Naive thymus-derived CD4-positive, alpha-beta T cell (primary cell): ENCODE measurements at regions of chr13 and their contacts with region 1.

Region 1: GRCh38 chr13:27826379-27827353 is 34.4 kb downstream of the GSX1 start:
- DNase-seq: peak; percentile 29 to 70 (median 53)
- ATAC-seq: peak; percentile 67
- H3K4me3 ChIP-seq: no peak overlapping the region
- H3K4me3 Mint-ChIP-seq: peak overlapping the region in 3 of 10 donors; percentile 22 to 34 (median 29)
- H3K27ac ChIP-seq: no peak overlapping the region
- H3K27ac Mint-ChIP-seq: no peak overlapping the region
- H3K4me1 ChIP-seq: peaks cover 0 to 3% of the 10 kb centered on the region in 2 donors
- H3K4me1 Mint-ChIP-seq: peaks cover 0 to 15% (median 3%) of the 10 kb centered on the region in 7 donors
- H3K27me3 ChIP-seq: peaks cover 3 to 12% of the 10 kb centered on the region in 2 donors
- H3K27me3 Mint-ChIP-seq: peaks cover 73 to 91% (median 75%) of the 10 kb centered on the region in 5 donors

Region 2: GRCh38 chr13:26985285-26985878 is 841.3 kb before region 1 on chr13:
- CTCF ChIA-PET with region 1: interaction called, 12 read pairs
- POLR2A ChIA-PET with region 1: no interaction called
- intact Hi-C with region 1: loop called (anchors 1 to 5 kb)
- DNase-seq: peak; percentile 17 to 76 (median 65)
- ATAC-seq: peak; percentile 83
- H3K4me3 ChIP-seq: no peak overlapping the region
- H3K4me3 Mint-ChIP-seq: no peak overlapping the region
- H3K27ac ChIP-seq: no peak overlapping the region
- H3K27ac Mint-ChIP-seq: peak overlapping the region in 1 of 9 donors; percentile 46
- H3K4me1 ChIP-seq: no peaks in the 10 kb centered on the region
- H3K4me1 Mint-ChIP-seq: peaks cover 0 to 10% (median 0%) of the 10 kb centered on the region in 7 donors
- H3K27me3 ChIP-seq: no peaks in the 10 kb centered on the region
- H3K27me3 Mint-ChIP-seq: peaks cover 3 to 17% (median 11%) of the 10 kb centered on the region in 5 donors

Region 3: DNA sequence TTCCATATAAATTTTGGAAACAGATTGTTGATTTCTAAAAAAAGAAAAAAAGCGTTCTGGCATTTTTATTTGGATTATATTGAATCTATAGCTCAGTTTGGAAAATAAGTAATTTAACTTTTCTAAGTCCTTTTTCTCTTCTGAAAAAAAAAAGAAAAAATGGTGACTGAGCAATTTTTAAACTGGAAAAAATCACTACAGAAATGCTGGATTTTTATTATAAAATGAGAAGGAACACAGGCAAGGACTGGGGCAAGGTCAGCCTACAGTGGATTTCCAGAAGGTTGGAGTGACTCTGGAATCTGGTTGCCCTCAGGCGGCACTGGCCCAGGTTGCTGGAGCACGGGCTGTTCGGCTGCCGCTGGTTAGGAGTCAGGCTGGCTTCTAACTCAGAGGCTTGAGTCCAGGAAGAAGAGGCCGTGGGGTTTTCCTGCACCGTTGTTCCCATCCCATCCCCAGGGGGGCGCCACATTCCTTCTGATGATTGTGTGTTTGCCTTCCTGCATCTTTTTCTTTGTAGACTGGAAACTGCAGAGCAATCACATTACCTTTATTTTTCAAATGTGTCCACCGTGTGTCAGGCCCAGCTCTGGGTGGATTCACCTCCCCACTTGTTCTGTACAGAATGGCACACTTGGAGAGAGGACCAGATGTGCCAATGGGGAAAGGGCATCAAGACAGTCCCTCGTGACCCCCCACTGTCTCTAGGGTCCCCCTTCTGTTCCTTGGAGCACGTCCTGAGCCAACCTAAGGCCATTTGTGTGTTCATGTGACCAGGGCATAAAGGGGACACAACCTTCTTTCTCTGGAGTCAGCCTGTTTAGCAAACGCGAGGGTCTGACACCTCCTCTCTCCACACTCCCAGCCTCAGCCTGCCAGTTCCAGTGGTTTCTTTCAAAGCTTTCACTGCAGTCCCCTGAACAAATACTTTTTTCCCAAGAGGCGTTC is 446.7 kb before region 1 on chr13:
- CTCF ChIA-PET with region 1: interaction called, 124 read pairs
- POLR2A ChIA-PET with region 1: no interaction called
- intact Hi-C with region 1: loop called in 1 of 2 experiments (anchors 1 kb)
- DNase-seq: peak; percentile 25 to 62 (median 43)
- ATAC-seq: peak; percentile 65
- H3K4me3 ChIP-seq: no peak overlapping the region
- H3K4me3 Mint-ChIP-seq: no peak overlapping the region
- H3K27ac ChIP-seq: no peak overlapping the region
- H3K27ac Mint-ChIP-seq: no peak overlapping the region
- H3K4me1 ChIP-seq: no peaks in the 10 kb centered on the region
- H3K4me1 Mint-ChIP-seq: peaks cover 0 to 10% (median 0%) of the 10 kb centered on the region in 7 donors
- H3K27me3 ChIP-seq: no peaks in the 10 kb centered on the region
- H3K27me3 Mint-ChIP-seq: peaks cover 4 to 9% (median 6%) of the 10 kb centered on the region in 5 donors

Region 4: DNA sequence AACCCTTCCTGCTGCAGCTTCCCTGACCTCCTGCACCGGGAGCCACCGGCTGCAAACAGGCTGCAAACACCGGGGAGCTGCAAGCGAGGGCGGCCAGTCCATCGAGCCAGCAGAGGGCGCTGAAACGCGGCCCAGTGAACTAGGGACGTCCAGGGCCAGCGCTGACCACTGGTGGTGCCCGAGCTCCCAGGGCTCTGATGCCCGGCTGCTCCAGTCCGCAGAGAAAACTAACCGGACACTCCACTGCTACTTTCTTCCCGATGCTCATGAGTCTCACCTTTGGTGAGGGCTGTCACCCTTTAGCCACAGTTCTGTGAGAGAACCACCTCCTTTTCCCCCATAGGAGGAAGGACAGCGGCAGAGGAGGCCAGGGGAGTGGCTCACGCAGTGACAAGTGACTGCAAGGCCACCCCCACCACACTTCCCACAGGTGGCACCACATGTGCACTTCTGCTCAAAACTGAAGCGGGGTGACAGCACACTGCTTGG is 293.5 kb before region 1 on chr13:
- CTCF ChIA-PET with region 1: interaction called, 6 read pairs
- POLR2A ChIA-PET with region 1: no interaction called
- intact Hi-C with region 1: loop called (anchors 1 kb)
- DNase-seq: peak in 7 of 9 donors; percentile 17 to 51 (median 42)
- ATAC-seq: peak; percentile 83
- H3K4me3 ChIP-seq: no peak overlapping the region
- H3K4me3 Mint-ChIP-seq: peak overlapping the region in 6 of 10 donors; percentile 26 to 52 (median 44)
- H3K27ac ChIP-seq: no peak overlapping the region
- H3K27ac Mint-ChIP-seq: no peak overlapping the region
- H3K4me1 ChIP-seq: peaks cover 0 to 9% of the 10 kb centered on the region in 2 donors
- H3K4me1 Mint-ChIP-seq: peaks cover 0 to 12% (median 10%) of the 10 kb centered on the region in 7 donors
- H3K27me3 ChIP-seq: no peaks in the 10 kb centered on the region
- H3K27me3 Mint-ChIP-seq: peaks cover 0 to 17% (median 5%) of the 10 kb centered on the region in 5 donors

Region 5: DNA sequence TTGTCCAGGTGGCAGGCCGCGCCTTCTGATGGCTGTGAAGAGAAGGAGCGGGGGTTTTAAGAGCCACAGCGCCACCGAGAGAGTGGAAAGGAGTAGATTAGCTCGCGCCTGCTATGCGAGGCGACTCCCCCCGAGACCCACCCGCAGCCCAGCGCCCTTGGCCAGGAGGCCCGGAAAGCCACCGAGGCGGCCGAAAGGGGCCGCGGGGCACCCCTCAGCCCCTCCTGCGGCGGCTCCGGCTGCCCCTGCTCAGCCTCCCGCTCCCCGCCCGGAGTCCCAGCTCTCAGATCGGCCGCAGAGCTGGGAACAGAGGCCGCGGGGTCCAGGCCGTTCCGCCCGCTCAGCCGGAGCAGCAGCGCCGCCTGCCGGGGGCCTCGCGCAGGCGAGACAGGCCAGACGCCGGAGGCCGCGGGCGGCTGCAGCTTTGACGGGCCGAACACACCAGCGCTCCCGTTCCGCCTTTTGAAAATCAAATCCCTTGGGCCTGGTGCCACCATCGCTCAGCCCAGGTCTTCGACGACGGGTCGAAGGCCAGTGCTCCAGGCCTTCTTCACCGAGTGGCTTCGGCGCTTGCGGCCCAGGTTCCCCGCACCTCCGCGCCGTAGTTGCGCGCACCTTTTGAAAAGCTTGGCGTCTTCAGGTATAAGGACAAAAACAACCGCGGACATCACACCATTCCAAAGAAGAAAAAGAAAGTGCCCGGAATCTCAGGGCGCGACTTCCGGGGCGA is 127.2 kb after region 1 on chr13:
- CTCF ChIA-PET with region 1: no interaction called
- POLR2A ChIA-PET with region 1: no interaction called
- intact Hi-C with region 1: loop called in 1 of 2 experiments (anchors 10 kb)
- DNase-seq: peak in 8 of 9 donors; percentile 28 to 79 (median 54)
- ATAC-seq: peak; percentile 87
- H3K4me3 ChIP-seq: peak overlapping the region; percentile 35
- H3K4me3 Mint-ChIP-seq: peak overlapping the region; percentile 70 to 83 (median 78)
- H3K27ac ChIP-seq: no peak overlapping the region
- H3K27ac Mint-ChIP-seq: peak overlapping the region in 1 of 9 donors; percentile 38
- H3K4me1 ChIP-seq: no peaks in the 10 kb centered on the region
- H3K4me1 Mint-ChIP-seq: peaks cover 0 to 26% (median 15%) of the 10 kb centered on the region in 7 donors
- H3K27me3 ChIP-seq: peaks cover 0 to 16% of the 10 kb centered on the region in 2 donors
- H3K27me3 Mint-ChIP-seq: peaks cover 75 to 83% (median 77%) of the 10 kb centered on the region in 5 donors

Region 6: DNA sequence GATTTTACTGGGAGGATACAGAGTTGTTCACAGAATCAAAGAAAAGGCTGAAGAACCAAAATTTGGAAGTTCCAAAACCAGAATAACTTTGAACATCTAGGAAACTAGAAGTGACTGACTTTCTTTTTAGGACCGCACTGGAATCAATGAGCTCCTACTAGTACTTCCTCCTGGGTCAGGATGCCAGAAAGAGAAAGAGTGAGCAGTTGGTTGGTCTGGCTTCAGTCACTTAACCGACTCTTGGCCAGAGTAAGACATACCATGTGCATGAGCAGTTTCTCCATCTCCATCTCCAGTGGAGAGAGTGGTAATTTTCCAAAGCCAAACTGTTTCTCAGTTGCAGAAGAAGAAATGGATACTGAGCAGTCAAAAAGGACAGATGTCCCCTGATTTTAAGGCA is 966.3 kb after region 1 on chr13:
- CTCF ChIA-PET with region 1: no interaction called
- POLR2A ChIA-PET with region 1: no interaction called
- intact Hi-C with region 1: loop called in 1 of 2 experiments (anchors 5 kb)
- DNase-seq: no peak
- ATAC-seq: no peak
- H3K4me3 ChIP-seq: no peak overlapping the region
- H3K4me3 Mint-ChIP-seq: no peak overlapping the region
- H3K27ac ChIP-seq: no peak overlapping the region
- H3K27ac Mint-ChIP-seq: no peak overlapping the region
- H3K4me1 ChIP-seq: no peaks in the 10 kb centered on the region
- H3K4me1 Mint-ChIP-seq: peaks cover 0 to 6% (median 4%) of the 10 kb centered on the region in 7 donors
- H3K27me3 ChIP-seq: no peaks in the 10 kb centered on the region
- H3K27me3 Mint-ChIP-seq: peaks cover 16 to 42% (median 30%) of the 10 kb centered on the region in 5 donors

Region 7: DNA sequence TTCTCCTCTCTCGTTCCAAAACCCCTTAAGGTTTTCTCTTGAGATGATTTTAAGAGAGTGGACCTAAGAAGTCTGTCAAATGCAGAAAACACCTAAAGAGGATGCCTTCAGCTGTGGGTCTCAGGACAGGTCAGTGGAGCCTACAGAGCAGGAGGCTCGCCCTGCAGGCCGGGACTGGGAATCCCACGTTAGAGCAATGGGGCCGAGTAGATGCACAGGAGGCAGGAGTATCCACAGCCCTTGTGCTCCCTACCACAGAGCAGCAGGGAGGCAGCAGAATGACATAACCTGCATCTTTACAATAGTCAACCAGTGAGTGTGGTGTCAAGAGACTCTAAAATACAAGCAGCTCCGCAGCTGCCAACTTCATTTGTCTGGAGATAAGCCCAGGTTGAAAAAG is 1222.9 kb after region 1 on chr13:
- CTCF ChIA-PET with region 1: no interaction called
- POLR2A ChIA-PET with region 1: no interaction called
- intact Hi-C with region 1: no loop called
- DNase-seq: no peak
- ATAC-seq: no peak
- H3K4me3 ChIP-seq: no peak overlapping the region
- H3K4me3 Mint-ChIP-seq: no peak overlapping the region
- H3K27ac ChIP-seq: no peak overlapping the region
- H3K27ac Mint-ChIP-seq: no peak overlapping the region
- H3K4me1 ChIP-seq: no peaks in the 10 kb centered on the region
- H3K4me1 Mint-ChIP-seq: peaks cover 0 to 3% (median 0%) of the 10 kb centered on the region in 7 donors
- H3K27me3 ChIP-seq: no peaks in the 10 kb centered on the region
- H3K27me3 Mint-ChIP-seq: peaks cover 0 to 6% (median 3%) of the 10 kb centered on the region in 5 donors